CD8-positive, alpha-beta T cell (primary cell): ENCODE measurements at regions of chr11 and their contacts with region 1.

Region 1: DNA sequence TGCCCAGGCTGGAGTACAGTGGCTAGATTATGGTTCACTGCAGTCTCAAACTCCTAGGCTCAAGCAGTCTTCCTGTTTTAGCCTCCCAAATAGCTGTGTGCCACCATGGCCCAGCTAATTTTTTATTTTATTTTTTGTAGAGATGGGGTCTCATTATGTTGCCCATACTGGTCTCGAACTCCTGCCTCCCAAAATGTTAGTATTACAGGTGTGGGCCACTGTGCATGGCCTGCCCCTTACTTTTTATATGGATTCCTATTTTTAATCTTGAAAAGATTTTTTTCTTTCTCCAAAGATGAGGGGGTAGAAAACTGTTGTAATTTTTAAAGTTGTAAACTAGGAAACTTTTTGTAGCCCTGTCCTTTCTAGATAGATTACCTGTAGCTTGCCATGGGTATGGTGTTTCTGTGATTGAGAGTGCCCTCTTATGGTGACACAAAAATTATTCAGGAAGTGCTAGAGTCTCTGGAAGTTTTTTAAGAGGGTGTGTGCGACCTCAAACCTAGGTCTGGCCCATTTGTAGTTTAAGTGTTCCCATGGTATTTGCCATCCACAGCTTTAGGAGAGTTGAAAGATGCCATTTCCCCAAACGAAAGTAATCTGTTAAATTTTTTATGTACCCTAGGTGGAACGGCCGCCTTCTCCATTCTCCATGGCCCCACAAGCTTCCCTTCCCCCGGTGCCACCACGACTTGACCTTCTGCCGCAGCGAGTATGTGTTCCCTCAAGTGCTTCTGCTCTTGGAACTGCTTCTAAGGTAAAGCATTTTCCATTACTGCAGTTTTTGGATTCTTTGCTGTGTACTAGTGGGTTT is 32.4 kb downstream of the MCAM start:
- DNase-seq: peak in 2 of 9 experiments; percentile 62 to 78
- ATAC-seq: peak; percentile 96
- H3K4me3 ChIP-seq: no peak overlapping the region
- H3K4me3 Mint-ChIP-seq: no peak overlapping the region
- H3K27ac ChIP-seq: no peak overlapping the region
- H3K27ac Mint-ChIP-seq: peak overlapping the region; percentile 7
- H3K4me1 ChIP-seq: peaks cover 18% of the 10 kb centered on the region
- H3K4me1 Mint-ChIP-seq: peaks cover 34% of the 10 kb centered on the region
- H3K27me3 ChIP-seq: no peaks in the 10 kb centered on the region
- H3K27me3 Mint-ChIP-seq: no peaks in the 10 kb centered on the region
- CTCF ChIP-seq: peak; percentile 59

Region 2: GRCh38 chr11:119168471-119169281 is 115.9 kb before region 1 on chr11 and contains the start of gene NLRX1:
- CTCF ChIA-PET with region 1: interaction called, 7 read pairs
- POLR2A ChIA-PET with region 1: no interaction called
- intact Hi-C with region 1: loop called in 1 of 2 experiments (anchors 1 kb)
- DNase-seq: peak; percentile 70 to 90 (median 81)
- ATAC-seq: peak; percentile 99
- H3K4me3 ChIP-seq: peak within 1 kb of the TSS; percentile 61 to 70
- H3K4me3 Mint-ChIP-seq: peak within 1 kb of the TSS; percentile 87
- H3K27ac ChIP-seq: peak within 1 kb of the TSS; percentile 60 to 69
- H3K27ac Mint-ChIP-seq: peak within 1 kb of the TSS; percentile 81
- H3K4me1 ChIP-seq: peaks cover 6% of the 10 kb centered on the region
- H3K4me1 Mint-ChIP-seq: no peaks in the 10 kb centered on the region
- H3K27me3 ChIP-seq: no peaks in the 10 kb centered on the region
- H3K27me3 Mint-ChIP-seq: no peaks in the 10 kb centered on the region
- CTCF ChIP-seq: peak; percentile 80
- total RNA-seq, gene NLRX1: 5.1 TPM

Region 3: GRCh38 chr11:119236490-119236889 is 48.1 kb before region 1 on chr11:
- CTCF ChIA-PET with region 1: interaction called, 3 read pairs
- POLR2A ChIA-PET with region 1: interaction called, 4 read pairs
- intact Hi-C with region 1: loop called (anchors 2 to 5 kb)
- DNase-seq: no peak
- ATAC-seq: no peak
- H3K4me3 ChIP-seq: no peak overlapping the region
- H3K4me3 Mint-ChIP-seq: no peak overlapping the region
- H3K27ac ChIP-seq: no peak overlapping the region
- H3K27ac Mint-ChIP-seq: no peak overlapping the region
- H3K4me1 ChIP-seq: peaks cover 20% of the 10 kb centered on the region
- H3K4me1 Mint-ChIP-seq: peaks cover 46% of the 10 kb centered on the region
- H3K27me3 ChIP-seq: no peaks in the 10 kb centered on the region
- H3K27me3 Mint-ChIP-seq: no peaks in the 10 kb centered on the region
- CTCF ChIP-seq: no peak

Region 4: DNA sequence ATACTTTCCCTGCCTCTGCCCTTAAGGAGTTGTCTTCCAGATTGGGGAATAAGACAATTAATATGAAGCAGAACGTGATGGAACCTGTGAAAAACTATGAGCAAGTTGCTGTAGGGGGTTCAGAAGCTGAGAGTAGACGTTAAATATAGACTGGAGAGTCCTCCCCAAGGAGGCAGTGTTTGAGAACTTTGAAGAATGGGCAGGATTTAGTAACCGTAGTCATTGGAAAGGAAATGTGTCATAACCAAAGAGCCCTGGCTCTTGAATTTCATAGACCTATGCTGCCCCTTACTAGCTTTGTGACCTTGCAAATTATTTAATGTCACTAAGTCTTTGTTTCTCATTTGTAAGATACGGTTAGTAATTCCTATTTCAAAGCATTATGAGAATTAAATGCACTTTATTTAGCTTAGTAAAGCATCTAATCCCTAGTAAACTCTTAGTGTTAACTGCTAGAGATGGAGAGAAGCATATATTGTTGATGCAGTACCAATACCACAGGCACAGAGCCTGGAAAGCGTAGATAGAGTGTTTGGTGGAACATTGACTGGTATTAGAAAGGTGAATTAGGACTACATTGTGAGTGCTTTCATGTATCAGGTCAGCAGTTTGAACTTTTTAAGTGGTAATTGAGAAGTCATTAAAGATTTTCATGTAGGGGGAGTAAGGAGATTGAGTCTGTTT is 21.7 kb before region 1 on chr11:
- CTCF ChIA-PET with region 1: interaction called, 14 read pairs
- POLR2A ChIA-PET with region 1: interaction called, 3 read pairs
- intact Hi-C with region 1: loop called in 1 of 2 experiments (anchors 2 kb)
- DNase-seq: peak in 2 of 9 experiments; percentile 32 to 56
- ATAC-seq: peak; percentile 28
- H3K4me3 ChIP-seq: no peak overlapping the region
- H3K4me3 Mint-ChIP-seq: no peak overlapping the region
- H3K27ac ChIP-seq: peak overlapping the region in 1 of 2 experiments; percentile 77
- H3K27ac Mint-ChIP-seq: no peak overlapping the region
- H3K4me1 ChIP-seq: peaks cover 86% of the 10 kb centered on the region
- H3K4me1 Mint-ChIP-seq: peaks cover 50% of the 10 kb centered on the region
- H3K27me3 ChIP-seq: no peaks in the 10 kb centered on the region
- H3K27me3 Mint-ChIP-seq: no peaks in the 10 kb centered on the region
- CTCF ChIP-seq: no peak

Region 5: DNA sequence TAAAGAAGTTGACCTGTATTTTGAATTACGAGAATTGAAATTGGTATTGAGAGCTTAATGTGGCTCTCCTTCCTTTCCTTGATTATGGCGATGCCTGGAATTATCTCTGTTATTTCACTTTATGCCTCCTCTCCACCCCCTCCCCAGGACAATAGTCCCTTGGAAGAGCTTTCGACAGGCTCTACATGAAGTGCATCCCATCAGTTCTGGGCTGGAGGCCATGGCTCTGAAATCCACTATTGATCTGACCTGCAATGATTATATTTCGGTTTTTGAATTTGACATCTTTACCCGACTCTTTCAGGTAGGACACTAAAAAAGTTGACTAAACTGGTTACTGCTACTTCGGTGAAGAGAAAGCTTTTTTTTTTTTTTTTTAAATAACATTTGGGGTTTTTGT is 10.8 kb before region 1 on chr11:
- CTCF ChIA-PET with region 1: interaction called, 24 read pairs
- POLR2A ChIA-PET with region 1: interaction called, 3 read pairs
- intact Hi-C with region 1: loop called in 1 of 2 experiments (anchors 1 kb)
- DNase-seq: no peak
- ATAC-seq: no peak
- H3K4me3 ChIP-seq: no peak overlapping the region
- H3K4me3 Mint-ChIP-seq: no peak overlapping the region
- H3K27ac ChIP-seq: no peak overlapping the region
- H3K27ac Mint-ChIP-seq: peak overlapping the region; percentile 38
- H3K4me1 ChIP-seq: peaks cover 7% of the 10 kb centered on the region
- H3K4me1 Mint-ChIP-seq: peaks cover 18% of the 10 kb centered on the region
- H3K27me3 ChIP-seq: no peaks in the 10 kb centered on the region
- H3K27me3 Mint-ChIP-seq: no peaks in the 10 kb centered on the region
- CTCF ChIP-seq: no peak

Region 6: DNA sequence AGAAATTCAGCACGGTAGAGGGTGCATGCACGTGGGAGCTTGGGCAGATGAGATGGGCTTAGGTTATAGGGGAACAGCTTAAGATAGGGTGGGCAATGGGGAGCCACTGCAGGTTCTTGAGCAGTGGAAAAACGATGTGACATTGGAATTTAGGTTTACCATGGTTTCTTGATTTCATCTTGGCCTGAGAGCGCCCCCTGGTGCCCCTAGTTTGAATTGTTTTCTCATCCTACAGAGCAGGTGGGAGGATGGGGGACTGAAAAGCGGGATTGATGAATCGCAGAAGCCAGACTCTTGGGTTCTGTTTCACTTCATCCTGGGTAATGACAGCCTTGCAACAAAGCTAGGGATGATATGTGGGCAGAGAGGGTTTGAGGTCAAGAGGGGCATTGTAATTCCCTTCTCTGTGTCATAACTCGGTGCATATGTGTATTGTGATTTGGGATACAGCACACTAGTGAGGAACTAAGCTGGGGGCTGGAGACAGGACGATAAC is 39.0 kb after region 1 on chr11:
- CTCF ChIA-PET with region 1: interaction called, 47 read pairs
- POLR2A ChIA-PET with region 1: no interaction called
- intact Hi-C with region 1: loop called (anchors 1 to 2 kb)
- DNase-seq: peak; percentile 65 to 88 (median 76)
- ATAC-seq: peak; percentile 18
- H3K4me3 ChIP-seq: no peak overlapping the region
- H3K4me3 Mint-ChIP-seq: no peak overlapping the region
- H3K27ac ChIP-seq: no peak overlapping the region
- H3K27ac Mint-ChIP-seq: no peak overlapping the region
- H3K4me1 ChIP-seq: peaks cover 11% of the 10 kb centered on the region
- H3K4me1 Mint-ChIP-seq: peaks cover 26% of the 10 kb centered on the region
- H3K27me3 ChIP-seq: peaks cover 0 to 2% of the 10 kb centered on the region in 2 experiments
- H3K27me3 Mint-ChIP-seq: peaks cover 1% of the 10 kb centered on the region
- CTCF ChIP-seq: peak; percentile 77